Adrenal gland (tissue), 19 donors: ENCODE measurements at regions of chr19 and their contacts with region 1.

Region 1: GRCh38 chr19:47600246-47601179 is 8.4 kb upstream of the BICRA start:
- DNase-seq: peak; percentile 99 to 100 (median 100)
- H3K4me3 ChIP-seq: peak overlapping the region in 2 of 4 donors; percentile 26 to 59
- H3K27ac ChIP-seq: peak overlapping the region in 4 of 5 donors; percentile 51 to 90 (median 72)
- H3K4me1 ChIP-seq: peaks cover 10 to 17% of the 10 kb centered on the region in 2 donors
- H3K27me3 ChIP-seq: no peaks in the 10 kb centered on the region
- CTCF ChIP-seq: no peak
- POLR2A ChIP-seq: peak; percentile 87 to 98

Region 2: GRCh38 chr19:47370045-47370611 is 230.4 kb before region 1 on chr19:
- intact Hi-C with region 1: no loop called
- DNase-seq: peak; percentile 60 to 87 (median 71)
- H3K4me3 ChIP-seq: no peak overlapping the region
- H3K27ac ChIP-seq: peak overlapping the region in 3 of 5 donors; percentile 20 to 76 (median 70)
- H3K4me1 ChIP-seq: peaks cover 0 to 12% of the 10 kb centered on the region in 2 donors
- H3K27me3 ChIP-seq: no peaks in the 10 kb centered on the region
- CTCF ChIP-seq: no peak
- POLR2A ChIP-seq: no peak

Region 3: DNA sequence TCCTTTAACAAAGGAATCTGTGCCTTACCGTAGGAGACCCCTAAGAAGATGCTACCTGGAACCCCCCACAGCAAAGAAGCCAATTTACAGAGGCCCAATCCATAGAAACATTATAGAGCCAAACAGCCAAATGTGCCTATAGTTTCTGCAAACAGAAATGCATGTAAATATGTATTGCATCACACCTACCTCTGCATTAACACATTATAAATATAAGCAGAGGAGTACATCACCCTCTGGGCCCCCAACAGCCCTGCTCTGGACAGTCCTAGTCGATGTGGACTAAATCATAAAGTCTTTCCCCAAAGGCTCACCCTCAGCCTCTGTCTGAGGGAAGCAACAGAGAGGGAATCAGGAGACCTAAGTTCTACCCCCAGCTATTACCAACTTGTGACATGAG is 53.3 kb before region 1 on chr19:
- intact Hi-C with region 1: loop called in 1 of 2 experiments (anchors 2 kb)
- DNase-seq: no peak
- H3K4me3 ChIP-seq: no peak overlapping the region
- H3K27ac ChIP-seq: no peak overlapping the region
- H3K4me1 ChIP-seq: peaks cover 0 to 2% of the 10 kb centered on the region in 2 donors
- H3K27me3 ChIP-seq: peaks cover 7% of the 10 kb centered on the region
- CTCF ChIP-seq: no peak
- POLR2A ChIP-seq: no peak

Region 4: GRCh38 chr19:47697863-47698609 is 97.5 kb after region 1 on chr19:
- intact Hi-C with region 1: loop called in 1 of 2 experiments (anchors 10 kb)
- DNase-seq: peak; percentile 78 to 90 (median 87)
- H3K4me3 ChIP-seq: no peak overlapping the region
- H3K27ac ChIP-seq: peak overlapping the region; percentile 19 to 77 (median 50)
- H3K4me1 ChIP-seq: peaks cover 4 to 6% of the 10 kb centered on the region in 2 donors
- H3K27me3 ChIP-seq: no peaks in the 10 kb centered on the region
- CTCF ChIP-seq: peak; percentile 95 to 100 (median 99)
- POLR2A ChIP-seq: no peak